ENCODE measurements at regions of chr16 and their contacts with region 1.

Region 1: GRCh38 chr16:84726079-84726668 is 26.4 kb downstream of the USP10 start:
- DNase-seq: peak; percentile 89 to 96 (median 95)
- H3K4me3 ChIP-seq: no peak overlapping the region
- H3K27ac ChIP-seq: no peak overlapping the region
- H3K4me1 ChIP-seq: peaks cover 7% of the 10 kb centered on the region
- H3K27me3 ChIP-seq: no peaks in the 10 kb centered on the region
- CTCF ChIP-seq: peak; percentile 87 to 92 (median 88)
- EP300 ChIP-seq: no peak
- POLR2A ChIP-seq: no peak

Region 2: DNA sequence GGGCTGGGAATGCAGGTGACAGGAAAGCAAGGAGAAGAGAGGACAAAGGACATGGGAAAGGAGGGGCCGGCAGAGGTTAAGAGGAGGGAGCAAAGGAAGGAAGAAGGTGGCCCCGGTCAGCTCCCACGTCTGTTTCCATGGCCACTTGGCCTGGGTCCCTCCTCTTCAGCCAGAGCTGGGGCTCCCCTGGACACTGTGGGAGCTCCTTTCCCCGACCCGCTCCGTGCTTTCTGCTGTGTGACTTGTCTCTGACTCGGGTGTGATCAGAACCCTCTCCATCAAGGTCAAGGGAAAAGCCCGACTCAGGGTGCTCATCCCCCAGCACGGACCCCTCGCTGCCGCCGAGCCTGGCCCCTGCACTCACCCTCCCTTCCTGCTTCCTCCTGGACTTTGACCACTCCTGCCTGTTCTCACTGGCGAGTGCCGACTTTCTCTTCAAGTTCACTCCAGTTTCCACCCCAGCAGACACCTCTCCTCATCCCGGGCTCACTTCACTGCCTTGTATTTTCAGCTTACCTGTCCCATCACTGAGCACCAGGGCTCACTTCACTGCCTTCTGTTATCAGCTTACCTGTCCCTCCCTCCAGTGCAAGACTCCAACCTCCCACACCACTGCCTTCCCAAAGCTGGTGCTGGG is 282.9 kb before region 1 on chr16:
- intact Hi-C with region 1: no loop called
- DNase-seq: no peak
- H3K4me3 ChIP-seq: no peak overlapping the region
- H3K27ac ChIP-seq: no peak overlapping the region
- H3K4me1 ChIP-seq: no peaks in the 10 kb centered on the region
- H3K27me3 ChIP-seq: no peaks in the 10 kb centered on the region
- CTCF ChIP-seq: no peak
- EP300 ChIP-seq: no peak
- POLR2A ChIP-seq: no peak

Region 3: GRCh38 chr16:84672276-84673202 is 53.6 kb before region 1 on chr16:
- intact Hi-C with region 1: loop called in 2 of 4 experiments (anchors 10 kb)
- DNase-seq: peak; percentile 46 to 78 (median 72)
- H3K4me3 ChIP-seq: no peak overlapping the region
- H3K27ac ChIP-seq: no peak overlapping the region
- H3K4me1 ChIP-seq: no peaks in the 10 kb centered on the region
- H3K27me3 ChIP-seq: no peaks in the 10 kb centered on the region
- CTCF ChIP-seq: peak; percentile 64 to 70 (median 66)
- EP300 ChIP-seq: no peak
- POLR2A ChIP-seq: no peak

Measured in ovary (tissue), 10 donors.